Esophagus muscularis mucosa (tissue), 4 donors: ENCODE measurements at regions of chr7 and their contacts with region 1.

Region 1: GRCh38 chr7:84336303-84336702 is 141.7 kb upstream of the SEMA3A start:
- DNase-seq: no peak
- H3K4me3 ChIP-seq: no peak overlapping the region
- H3K27ac ChIP-seq: no peak overlapping the region
- H3K4me1 ChIP-seq: no peaks in the 10 kb centered on the region
- H3K27me3 ChIP-seq: no peaks in the 10 kb centered on the region
- CTCF ChIP-seq: no peak
- EP300 ChIP-seq: no peak
- POLR2A ChIP-seq: no peak

Region 2: DNA sequence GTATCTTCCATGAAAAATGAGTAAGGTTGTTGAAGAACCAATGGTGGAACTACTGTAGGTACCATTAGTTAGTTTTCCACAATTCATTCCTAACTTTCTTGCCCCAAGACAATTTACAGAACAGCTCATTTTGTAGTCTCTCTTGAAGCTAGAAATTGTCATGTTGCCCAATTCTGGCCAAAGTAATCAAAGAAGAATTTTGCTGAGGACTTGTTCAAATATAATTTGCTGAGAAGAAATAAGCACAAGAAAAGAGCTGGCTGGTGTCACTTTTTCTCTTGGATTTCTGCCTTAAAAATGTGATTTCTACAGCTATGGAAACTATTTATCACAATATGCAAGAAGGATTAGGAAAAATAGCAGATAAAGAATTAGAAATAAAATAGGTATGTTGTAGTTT is 57.5 kb after region 1 on chr7:
- intact Hi-C with region 1: loop called (anchors 10 kb)
- DNase-seq: no peak
- H3K4me3 ChIP-seq: no peak overlapping the region
- H3K27ac ChIP-seq: no peak overlapping the region
- H3K4me1 ChIP-seq: peaks cover 0 to 7% (median 5%) of the 10 kb centered on the region in 4 donors
- H3K27me3 ChIP-seq: no peaks in the 10 kb centered on the region
- CTCF ChIP-seq: no peak
- EP300 ChIP-seq: no peak
- POLR2A ChIP-seq: no peak

Region 3: DNA sequence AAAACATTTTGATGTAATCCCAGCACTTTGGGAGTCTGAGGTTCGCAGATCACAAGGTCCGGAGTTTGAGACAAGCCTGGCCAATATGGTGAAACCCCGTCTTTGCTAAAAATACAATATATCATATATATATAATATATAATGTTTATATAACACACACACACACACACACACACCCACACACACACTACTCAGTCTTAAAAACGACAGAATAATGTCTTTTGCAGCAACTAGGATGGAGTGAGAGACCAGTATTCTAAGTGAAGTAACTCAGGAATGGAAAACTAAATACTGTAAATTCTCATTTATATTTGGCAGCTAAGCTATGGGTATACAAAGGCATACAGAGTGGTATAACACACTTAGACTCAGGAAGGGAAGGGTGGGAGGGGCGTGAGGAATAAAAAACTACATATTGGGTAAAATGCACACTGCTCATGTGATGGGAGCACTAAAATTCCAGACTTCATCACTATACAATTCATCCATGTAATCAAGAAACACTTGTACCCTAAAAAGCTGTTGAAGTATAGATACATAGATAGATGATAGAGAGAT is 89.5 kb after region 1 on chr7:
- intact Hi-C with region 1: no loop called
- DNase-seq: no peak
- H3K4me3 ChIP-seq: no peak overlapping the region
- H3K27ac ChIP-seq: no peak overlapping the region
- H3K4me1 ChIP-seq: no peaks in the 10 kb centered on the region
- H3K27me3 ChIP-seq: no peaks in the 10 kb centered on the region
- CTCF ChIP-seq: no peak
- EP300 ChIP-seq: no peak
- POLR2A ChIP-seq: no peak

Region 4: DNA sequence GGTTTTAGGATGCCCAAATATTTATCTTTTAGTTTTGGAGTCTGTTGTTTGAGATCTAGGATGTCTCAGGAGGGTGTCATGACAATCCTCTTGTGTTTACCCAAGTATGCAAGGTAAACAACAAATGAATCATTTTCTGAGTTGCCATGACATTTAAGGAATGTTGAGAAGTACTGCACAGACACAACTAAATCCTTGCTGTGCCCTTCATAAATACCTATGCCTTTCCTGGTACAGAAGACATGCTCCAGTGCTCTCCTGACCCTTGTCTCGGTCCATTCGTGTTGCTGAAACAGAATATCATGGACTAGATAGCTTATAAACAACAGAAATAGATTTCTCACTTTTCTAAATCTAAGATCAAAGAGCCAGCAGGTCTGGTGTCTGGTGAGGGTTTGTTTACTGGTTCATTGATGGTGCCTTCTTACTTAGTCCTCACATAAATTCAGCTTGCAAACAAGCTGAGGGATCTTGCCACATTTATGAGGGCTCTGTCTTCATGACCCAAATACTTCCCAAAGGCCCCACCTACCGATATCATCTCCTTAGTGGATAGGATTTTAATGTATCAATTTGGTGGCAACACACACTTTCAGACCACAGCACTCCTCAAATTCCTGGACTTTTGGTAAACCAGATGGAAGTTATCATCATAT is 200.1 kb after region 1 on chr7:
- intact Hi-C with region 1: no loop called
- DNase-seq: no peak
- H3K4me3 ChIP-seq: no peak overlapping the region
- H3K27ac ChIP-seq: peak overlapping the region in 1 of 4 donors; percentile 10
- H3K4me1 ChIP-seq: peaks cover 0 to 11% (median 6%) of the 10 kb centered on the region in 4 donors
- H3K27me3 ChIP-seq: no peaks in the 10 kb centered on the region
- CTCF ChIP-seq: no peak
- EP300 ChIP-seq: no peak
- POLR2A ChIP-seq: no peak